Calu3 (cell line): ENCODE measurements at regions of chr20 and their contacts with region 1.

Region 1: DNA sequence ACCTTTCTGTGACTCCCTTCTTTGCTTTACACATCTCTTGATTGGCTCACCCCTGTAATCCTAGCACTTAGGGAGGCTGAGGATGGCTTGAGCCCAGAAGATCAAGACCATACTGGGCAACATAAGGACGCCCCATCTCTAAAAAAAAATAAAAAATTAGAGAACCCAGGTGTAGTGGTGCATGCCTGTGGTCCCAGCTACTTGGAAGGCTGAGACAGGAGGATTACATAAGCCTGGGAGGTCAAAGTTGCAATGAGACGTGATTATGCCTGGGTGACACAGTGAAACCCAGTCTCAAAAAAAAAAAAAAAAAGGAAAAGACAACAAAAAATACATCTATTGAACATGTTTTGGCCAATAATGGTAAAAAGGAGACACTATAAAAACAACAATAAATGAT is 37.8 kb downstream of the CHD6 start:
- DNase-seq: no peak
- H3K4me3 Mint-ChIP-seq: no peak overlapping the region
- H3K27ac Mint-ChIP-seq: no peak overlapping the region
- H3K4me1 Mint-ChIP-seq: peaks cover 35% of the 10 kb centered on the region
- H3K27me3 Mint-ChIP-seq: no peaks in the 10 kb centered on the region
- CTCF ChIP-seq: no peak

Region 2: GRCh38 chr20:41617931-41618806 is 37.8 kb after region 1 on chr20 and contains the start of gene CHD6:
- CTCF ChIA-PET with region 1: interaction called, 3 read pairs
- intact Hi-C with region 1: loop called (anchors 5 kb)
- DNase-seq: peak; percentile 100
- H3K4me3 Mint-ChIP-seq: peak within 1 kb of the TSS; percentile 78
- H3K27ac Mint-ChIP-seq: peak within 1 kb of the TSS; percentile 66
- H3K4me1 Mint-ChIP-seq: peaks cover 37% of the 10 kb centered on the region
- H3K27me3 Mint-ChIP-seq: no peaks in the 10 kb centered on the region
- CTCF ChIP-seq: no peak
- total RNA-seq, gene CHD6: 94.5 and 98.5 TPM in 2 replicates

Region 3: GRCh38 chr20:41910558-41910957 is 330.2 kb after region 1 on chr20:
- CTCF ChIA-PET with region 1: no interaction called
- intact Hi-C with region 1: no loop called
- DNase-seq: no peak
- H3K4me3 Mint-ChIP-seq: no peak overlapping the region
- H3K27ac Mint-ChIP-seq: no peak overlapping the region
- H3K4me1 Mint-ChIP-seq: no peaks in the 10 kb centered on the region
- H3K27me3 Mint-ChIP-seq: no peaks in the 10 kb centered on the region
- CTCF ChIP-seq: no peak